Thyroid gland (tissue), 4 donors: ENCODE measurements at regions of chr3 and their contacts with region 1.

Region 1: DNA sequence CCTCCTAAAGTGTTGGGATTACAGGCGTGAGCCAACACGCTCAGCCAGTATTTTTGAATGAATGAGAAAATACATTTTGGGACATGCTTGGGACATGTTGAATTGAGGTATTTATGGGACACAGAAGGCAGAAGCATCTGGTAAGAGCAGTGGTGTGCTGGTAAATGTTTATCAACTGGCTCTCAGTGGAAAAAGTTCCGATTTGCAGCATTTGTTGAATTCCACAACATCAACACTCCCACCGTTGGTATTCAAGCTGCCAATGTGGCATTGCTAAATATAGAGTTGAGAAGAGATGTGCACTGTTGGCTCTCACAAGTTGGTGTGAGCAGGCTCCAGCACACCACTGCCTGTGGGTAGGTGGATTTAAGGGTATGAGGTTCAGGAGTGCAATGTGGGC is 35.8 kb upstream of the LRRFIP2 start:
- DNase-seq: no peak
- H3K4me3 ChIP-seq: no peak overlapping the region
- H3K27ac ChIP-seq: no peak overlapping the region
- H3K4me1 ChIP-seq: peaks cover 3 to 10% of the 10 kb centered on the region in 2 donors
- H3K27me3 ChIP-seq: no peaks in the 10 kb centered on the region
- CTCF ChIP-seq: no peak
- POLR2A ChIP-seq: no peak

Region 2: GRCh38 chr3:37024092-37024491 is 186.1 kb before region 1 on chr3:
- intact Hi-C with region 1: loop called (anchors 10 kb)
- DNase-seq: no peak
- H3K4me3 ChIP-seq: no peak overlapping the region
- H3K27ac ChIP-seq: peak overlapping the region in 1 of 3 donors; percentile 94
- H3K4me1 ChIP-seq: peaks cover 29 to 40% of the 10 kb centered on the region in 2 donors
- H3K27me3 ChIP-seq: no peaks in the 10 kb centered on the region
- CTCF ChIP-seq: peak in 3 of 6 experiments; percentile 32 to 41 (median 39)
- POLR2A ChIP-seq: no peak